Heart right ventricle (tissue), 16 donors: ENCODE measurements at regions of chr19 and their contacts with region 1.

Region 1: DNA sequence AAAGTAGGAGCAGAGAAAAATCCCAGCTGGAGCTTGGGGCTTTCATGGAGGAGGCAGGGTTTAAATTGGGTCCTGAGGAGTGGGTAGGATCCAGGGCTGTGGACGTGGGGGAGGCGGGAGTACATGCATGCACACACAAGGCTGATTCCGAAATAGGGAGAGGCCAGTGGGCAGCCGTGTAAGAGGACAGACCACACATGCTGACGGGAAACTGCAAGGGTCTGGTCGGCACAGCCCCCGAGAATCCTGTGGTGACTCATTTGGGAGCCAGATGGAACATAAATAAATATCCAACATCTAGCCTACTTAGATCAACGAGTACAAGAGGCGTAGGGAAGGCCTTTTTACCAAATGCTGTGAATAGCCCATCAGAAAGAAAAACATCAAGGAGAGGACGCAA is 216.3 kb upstream of the ZNF507 start:
- DNase-seq: no peak
- ATAC-seq: no peak
- H3K4me3 ChIP-seq: no peak overlapping the region
- H3K27ac ChIP-seq: no peak overlapping the region
- H3K4me1 ChIP-seq: no peaks in the 10 kb centered on the region
- H3K27me3 ChIP-seq: peaks cover 0 to 12% (median 0%) of the 10 kb centered on the region in 7 donors
- CTCF ChIP-seq: no peak

Region 2: GRCh38 chr19:32053861-32054260 is 75.3 kb before region 1 on chr19:
- intact Hi-C with region 1: loop called in 1 of 10 experiments (anchors 1 kb)
- DNase-seq: no peak
- ATAC-seq: no peak
- H3K4me3 ChIP-seq: no peak overlapping the region
- H3K27ac ChIP-seq: no peak overlapping the region
- H3K4me1 ChIP-seq: no peaks in the 10 kb centered on the region
- H3K27me3 ChIP-seq: no peaks in the 10 kb centered on the region
- CTCF ChIP-seq: no peak

Region 3: DNA sequence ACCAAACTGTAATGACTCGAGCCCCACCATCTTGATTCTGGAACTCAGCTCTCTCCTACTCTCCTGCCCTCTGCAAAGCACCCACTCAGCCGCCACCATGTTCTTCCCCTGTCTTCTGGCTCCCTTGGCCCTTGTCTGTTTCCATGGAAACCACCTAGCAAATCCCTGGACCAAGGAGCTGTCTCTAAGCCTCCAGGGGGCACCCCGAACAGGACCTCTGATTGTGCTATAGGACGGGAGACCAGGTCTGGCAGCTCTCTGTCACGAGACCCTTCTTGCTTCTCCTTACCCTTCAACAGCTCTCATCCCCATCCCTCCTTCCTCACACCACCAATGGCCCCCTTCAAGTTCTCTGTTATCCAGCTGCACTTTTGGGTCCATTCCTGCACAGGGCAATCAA is 61.5 kb before region 1 on chr19:
- intact Hi-C with region 1: no loop called
- DNase-seq: no peak
- ATAC-seq: no peak
- H3K4me3 ChIP-seq: no peak overlapping the region
- H3K27ac ChIP-seq: no peak overlapping the region
- H3K4me1 ChIP-seq: peaks cover 0 to 8% (median 0%) of the 10 kb centered on the region in 9 donors
- H3K27me3 ChIP-seq: no peaks in the 10 kb centered on the region
- CTCF ChIP-seq: no peak